Adrenal gland (tissue), 19 donors: ENCODE measurements at regions of chr12 and their contacts with region 1.

Region 1: GRCh38 chr12:13745111-13745685 is 236.2 kb downstream of the GRIN2B start:
- DNase-seq: no peak
- H3K4me3 ChIP-seq: no peak overlapping the region
- H3K27ac ChIP-seq: no peak overlapping the region
- H3K4me1 ChIP-seq: no peaks in the 10 kb centered on the region
- H3K27me3 ChIP-seq: no peaks in the 10 kb centered on the region
- CTCF ChIP-seq: no peak
- POLR2A ChIP-seq: no peak

Region 2: DNA sequence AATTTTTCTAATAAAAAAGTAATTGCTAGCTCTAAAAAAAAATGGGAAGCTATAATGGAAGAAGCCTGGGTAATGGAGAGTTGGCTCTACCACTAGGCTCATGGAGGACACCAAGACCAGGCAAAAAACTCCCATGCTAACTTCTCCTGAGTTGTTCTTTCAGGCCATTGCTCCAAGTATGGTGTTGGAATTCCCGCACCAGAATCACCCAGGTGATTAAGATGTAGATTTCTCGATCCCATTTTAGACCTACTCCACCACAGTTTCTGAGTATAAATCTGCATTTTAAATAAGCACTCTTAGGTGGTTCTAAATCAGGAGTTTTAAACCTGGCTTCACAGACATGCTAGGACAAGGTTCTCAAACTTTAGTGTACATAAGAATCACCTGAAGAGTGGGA is 327.7 kb before region 1 on chr12:
- intact Hi-C with region 1: no loop called
- DNase-seq: no peak
- H3K4me3 ChIP-seq: no peak overlapping the region
- H3K27ac ChIP-seq: no peak overlapping the region
- H3K4me1 ChIP-seq: no peaks in the 10 kb centered on the region
- H3K27me3 ChIP-seq: no peaks in the 10 kb centered on the region
- CTCF ChIP-seq: no peak
- POLR2A ChIP-seq: no peak

Region 3: DNA sequence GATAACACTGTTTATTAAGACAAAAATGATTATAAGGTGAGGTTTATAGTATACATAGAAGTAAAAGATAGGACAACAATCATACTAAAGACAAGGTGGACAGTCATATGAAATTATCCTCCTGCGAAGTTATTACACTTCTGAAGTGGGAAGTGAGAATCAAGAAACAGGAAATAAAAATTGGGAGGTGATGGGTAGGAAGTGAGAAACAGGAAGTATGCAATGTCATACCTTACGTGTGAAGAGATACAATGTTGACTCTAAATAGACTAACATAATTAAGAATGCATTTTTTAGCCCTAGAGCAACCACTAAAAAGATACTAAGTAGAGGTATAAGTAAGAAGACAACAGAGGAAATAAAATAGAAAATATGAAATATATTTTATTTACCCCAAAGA is 192.5 kb after region 1 on chr12:
- intact Hi-C with region 1: loop called in 1 of 2 experiments (anchors 10 kb)
- DNase-seq: no peak
- H3K4me3 ChIP-seq: no peak overlapping the region
- H3K27ac ChIP-seq: no peak overlapping the region
- H3K4me1 ChIP-seq: no peaks in the 10 kb centered on the region
- H3K27me3 ChIP-seq: no peaks in the 10 kb centered on the region
- CTCF ChIP-seq: no peak
- POLR2A ChIP-seq: no peak

Region 4: GRCh38 chr12:14167005-14167628 is 421.9 kb after region 1 on chr12:
- intact Hi-C with region 1: loop called in 1 of 2 experiments (anchors 10 kb)
- DNase-seq: peak; percentile 16 to 68 (median 44)
- H3K4me3 ChIP-seq: no peak overlapping the region
- H3K27ac ChIP-seq: no peak overlapping the region
- H3K4me1 ChIP-seq: no peaks in the 10 kb centered on the region
- H3K27me3 ChIP-seq: no peaks in the 10 kb centered on the region
- CTCF ChIP-seq: peak; percentile 79 to 96 (median 86)
- POLR2A ChIP-seq: no peak

Region 5: DNA sequence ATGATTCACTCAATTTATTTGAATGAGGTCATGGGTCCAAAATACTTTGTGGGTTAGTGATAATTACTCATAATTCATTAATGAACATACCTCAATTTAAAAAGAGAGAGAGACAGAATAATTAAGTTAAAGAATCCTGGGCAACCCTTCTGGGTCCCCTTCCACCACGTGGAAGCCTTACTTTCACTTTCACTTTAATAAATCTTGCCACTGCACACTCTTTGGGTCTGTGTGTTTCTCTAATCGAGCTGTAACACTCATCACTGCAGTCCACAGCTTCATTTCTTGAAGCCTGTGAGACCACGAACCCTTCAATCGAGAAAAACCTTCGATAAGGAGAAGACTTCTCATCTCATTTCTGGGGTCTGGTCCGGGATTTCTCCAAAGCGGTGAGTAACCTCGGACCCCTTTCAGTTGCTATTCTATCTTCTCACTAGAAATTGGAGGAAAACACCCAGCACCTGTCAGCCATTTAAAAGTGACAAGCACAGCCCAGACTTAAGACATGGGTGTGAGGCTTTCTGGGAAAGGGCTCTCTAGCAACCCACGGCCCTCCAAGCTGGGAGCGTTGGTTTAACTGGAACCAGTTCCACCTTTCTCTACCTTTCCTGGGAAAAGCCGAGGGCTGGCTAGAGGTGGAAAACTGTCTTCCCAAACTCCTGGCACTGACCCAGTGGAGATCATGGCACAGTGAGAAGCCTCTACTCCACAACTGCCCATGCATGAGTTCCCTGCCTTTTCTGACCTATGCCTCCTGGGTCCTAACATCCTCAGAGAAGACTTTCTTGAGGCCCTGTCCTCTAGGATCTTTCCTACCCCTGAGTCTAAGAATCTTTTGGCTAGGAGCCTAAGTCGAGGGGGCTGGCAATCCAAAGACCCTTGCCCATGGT is 471.5 kb after region 1 on chr12:
- intact Hi-C with region 1: no loop called
- DNase-seq: no peak
- H3K4me3 ChIP-seq: peak overlapping the region in 1 of 4 donors; percentile 22
- H3K27ac ChIP-seq: no peak overlapping the region
- H3K4me1 ChIP-seq: peaks cover 0 to 11% of the 10 kb centered on the region in 2 donors
- H3K27me3 ChIP-seq: no peaks in the 10 kb centered on the region
- CTCF ChIP-seq: no peak
- POLR2A ChIP-seq: no peak